ENCODE measurements at regions of chr5 and their contacts with region 1.

Region 1: GRCh38 chr5:157948738-157949410 is 89.9 kb upstream of the CLINT1 start:
- DNase-seq: peak; percentile 90
- ATAC-seq: peak; percentile 96
- H3K4me3 Mint-ChIP-seq: no peak overlapping the region
- H3K27ac Mint-ChIP-seq: no peak overlapping the region
- H3K4me1 Mint-ChIP-seq: peaks cover 4% of the 10 kb centered on the region
- H3K27me3 Mint-ChIP-seq: peaks cover 6% of the 10 kb centered on the region
- CTCF ChIP-seq: peak; percentile 77

Region 2: GRCh38 chr5:157778121-157778805 is 170.6 kb before region 1 on chr5:
- CTCF ChIA-PET with region 1: interaction called, 11 read pairs
- POLR2A ChIA-PET with region 1: no interaction called
- intact Hi-C with region 1: no loop called
- DNase-seq: no peak
- ATAC-seq: no peak
- H3K4me3 Mint-ChIP-seq: no peak overlapping the region
- H3K27ac Mint-ChIP-seq: no peak overlapping the region
- H3K4me1 Mint-ChIP-seq: no peaks in the 10 kb centered on the region
- H3K27me3 Mint-ChIP-seq: no peaks in the 10 kb centered on the region
- CTCF ChIP-seq: no peak

Region 3: GRCh38 chr5:157820593-157821252 is 128.2 kb before region 1 on chr5:
- CTCF ChIA-PET with region 1: interaction called, 80 read pairs
- POLR2A ChIA-PET with region 1: no interaction called
- intact Hi-C with region 1: loop called (anchors 1 kb)
- DNase-seq: peak; percentile 45
- ATAC-seq: no peak
- H3K4me3 Mint-ChIP-seq: no peak overlapping the region
- H3K27ac Mint-ChIP-seq: no peak overlapping the region
- H3K4me1 Mint-ChIP-seq: peaks cover 39% of the 10 kb centered on the region
- H3K27me3 Mint-ChIP-seq: no peaks in the 10 kb centered on the region
- CTCF ChIP-seq: peak; percentile 55

Region 4: DNA sequence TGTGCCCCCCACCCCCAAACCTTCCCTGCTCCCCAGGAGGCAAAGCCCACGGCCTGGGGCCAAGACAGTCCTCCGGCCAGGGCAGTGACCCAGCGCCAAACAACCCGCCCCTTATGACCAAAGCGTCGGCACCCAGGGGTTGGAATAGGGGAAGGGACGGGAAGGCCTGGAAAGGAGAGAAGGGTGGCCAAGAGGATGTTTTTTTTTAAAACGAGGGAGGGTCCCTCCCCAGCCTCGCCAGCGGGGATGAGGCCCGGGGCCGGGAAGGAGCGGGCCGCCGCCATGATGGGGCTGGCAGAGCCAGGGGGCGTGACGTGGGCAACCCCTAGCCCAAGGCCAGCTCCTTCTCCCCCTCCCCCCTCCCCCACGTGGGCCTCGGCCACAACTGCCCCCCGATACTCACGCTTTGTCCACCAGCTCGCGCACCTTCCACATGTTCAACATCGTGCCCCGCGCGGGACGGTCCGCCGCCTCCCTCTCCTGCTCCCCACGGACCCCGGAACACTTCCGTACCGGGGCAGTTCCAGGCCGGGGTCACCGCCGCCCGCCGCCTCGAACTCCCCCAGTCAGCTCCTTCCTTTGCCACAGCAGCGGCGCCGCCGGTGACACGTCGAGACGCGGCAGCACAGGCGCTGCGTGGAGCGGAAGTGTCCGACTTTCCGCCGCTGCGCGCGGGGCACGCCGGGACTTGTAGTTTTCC is 90.2 kb before region 1 on chr5 and contains the start of gene CLINT1:
- CTCF ChIA-PET with region 1: interaction called, 28 read pairs
- POLR2A ChIA-PET with region 1: interaction called, 3 read pairs
- intact Hi-C with region 1: no loop called
- DNase-seq: peak; percentile 93
- ATAC-seq: peak; percentile 83
- H3K4me3 Mint-ChIP-seq: peak within 1 kb of the TSS; percentile 97
- H3K27ac Mint-ChIP-seq: peak within 1 kb of the TSS; percentile 98
- H3K4me1 Mint-ChIP-seq: peaks cover 62% of the 10 kb centered on the region
- H3K27me3 Mint-ChIP-seq: no peaks in the 10 kb centered on the region
- CTCF ChIP-seq: no peak
- total RNA-seq, gene CLINT1: 56.8 to 60.7 TPM

Region 5: DNA sequence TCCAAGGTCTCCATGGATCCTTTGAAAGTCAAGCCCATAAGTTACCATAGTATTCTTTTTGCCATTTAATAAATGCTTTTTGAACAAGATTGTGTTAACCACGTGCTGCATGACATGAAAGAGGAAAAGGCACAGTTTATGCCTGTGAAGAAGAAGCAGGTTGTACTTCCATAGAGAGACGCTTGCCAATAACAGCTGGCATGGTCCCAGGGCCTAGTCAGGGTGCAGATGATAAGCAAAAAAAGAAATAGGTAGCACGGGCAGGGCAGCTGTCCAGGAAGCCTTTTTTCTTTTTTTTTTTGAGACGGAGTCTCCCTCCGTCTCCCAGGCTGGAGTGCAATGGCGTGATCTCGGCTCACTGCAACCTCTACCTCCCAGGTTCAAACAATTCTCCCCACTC is 18.2 kb before region 1 on chr5:
- CTCF ChIA-PET with region 1: interaction called, 37 read pairs
- POLR2A ChIA-PET with region 1: no interaction called
- intact Hi-C with region 1: no loop called
- DNase-seq: no peak
- ATAC-seq: no peak
- H3K4me3 Mint-ChIP-seq: no peak overlapping the region
- H3K27ac Mint-ChIP-seq: no peak overlapping the region
- H3K4me1 Mint-ChIP-seq: no peaks in the 10 kb centered on the region
- H3K27me3 Mint-ChIP-seq: no peaks in the 10 kb centered on the region
- CTCF ChIP-seq: no peak

Measured in activated CD8-positive, alpha-beta T cell treated with anti-CD3 and anti-CD28 coated beads for 36 hours (primary cell).